ENCODE measurements at regions of chr2 and their contacts with region 1.

Region 1: DNA sequence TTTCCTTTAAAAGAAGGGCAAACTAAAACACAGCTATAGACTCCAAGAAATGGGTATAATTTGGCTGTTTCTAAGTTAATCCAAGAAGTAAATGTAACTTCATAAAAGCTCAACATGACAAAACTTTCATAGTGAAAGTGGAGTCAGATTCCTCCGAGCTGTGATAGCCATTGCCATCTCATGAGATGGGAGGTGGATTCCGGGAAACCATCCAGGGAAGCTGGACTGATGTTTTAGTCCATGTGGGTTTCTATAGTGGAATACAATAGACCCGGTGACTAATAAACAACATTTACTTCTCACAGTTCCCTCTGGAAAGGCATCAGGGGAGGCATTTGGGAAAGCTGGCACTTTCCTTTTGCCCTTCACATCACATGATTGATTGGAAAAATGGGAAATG is 10.0 kb upstream of the LAPTM4A start:
- DNase-seq: no peak
- ATAC-seq: no peak
- H3K4me3 ChIP-seq: no peak overlapping the region
- H3K27ac ChIP-seq: no peak overlapping the region
- H3K4me1 ChIP-seq: no peaks in the 10 kb centered on the region
- H3K27me3 ChIP-seq: peaks cover 1% of the 10 kb centered on the region; the same call in 1 of the 2 replicates
- CTCF ChIP-seq: no peak

Region 2: GRCh38 chr2:19711470-19712372 is 349.8 kb before region 1 on chr2:
- CTCF ChIA-PET with region 1: no interaction called
- POLR2A ChIA-PET with region 1: no interaction called
- in situ Hi-C with region 1: no loop called
- intact Hi-C with region 1: no loop called
- DNase-seq: peak; percentile 13
- ATAC-seq: peak; percentile 42
- H3K4me3 ChIP-seq: no peak overlapping the region
- H3K27ac ChIP-seq: no peak overlapping the region
- H3K4me1 ChIP-seq: no peaks in the 10 kb centered on the region
- H3K27me3 ChIP-seq: no peaks in the 10 kb centered on the region
- CTCF ChIP-seq: no peak

Region 3: DNA sequence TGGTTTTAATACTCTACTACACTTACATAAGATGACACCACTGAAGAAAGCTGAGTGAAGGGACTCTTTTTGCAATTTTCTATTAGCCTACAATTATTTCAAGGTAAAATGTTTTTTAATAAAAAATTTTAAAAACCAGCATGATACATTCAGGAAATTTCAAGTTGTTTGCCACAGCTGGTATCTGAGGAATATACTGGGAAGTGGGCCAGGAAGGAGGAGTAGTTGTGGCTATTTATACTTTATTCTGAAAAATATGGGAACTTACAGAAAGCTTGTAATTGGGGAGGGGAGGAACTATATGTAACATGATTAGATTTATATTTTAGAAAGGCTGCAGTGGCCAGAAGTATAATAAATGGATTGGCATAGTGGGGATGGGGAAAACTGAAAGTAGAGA is 112.4 kb before region 1 on chr2:
- CTCF ChIA-PET with region 1: no interaction called
- POLR2A ChIA-PET with region 1: interaction called, 12 read pairs
- in situ Hi-C with region 1: no loop called
- intact Hi-C with region 1: no loop called
- DNase-seq: no peak
- ATAC-seq: no peak
- H3K4me3 ChIP-seq: no peak overlapping the region
- H3K27ac ChIP-seq: no peak overlapping the region
- H3K4me1 ChIP-seq: peaks cover 9% of the 10 kb centered on the region; the same call in 1 of the 2 replicates
- H3K27me3 ChIP-seq: no peaks in the 10 kb centered on the region
- CTCF ChIP-seq: no peak

Region 4: GRCh38 chr2:20097879-20098714 is 36.6 kb after region 1 on chr2:
- CTCF ChIA-PET with region 1: no interaction called
- POLR2A ChIA-PET with region 1: no interaction called
- in situ Hi-C with region 1: no loop called
- intact Hi-C with region 1: no loop called
- DNase-seq: peak; percentile 89
- ATAC-seq: peak; percentile 94
- H3K4me3 ChIP-seq: no peak overlapping the region
- H3K27ac ChIP-seq: no peak overlapping the region
- H3K4me1 ChIP-seq: no peaks in the 10 kb centered on the region
- H3K27me3 ChIP-seq: no peaks in the 10 kb centered on the region
- CTCF ChIP-seq: peak; percentile 95